Left cardiac atrium (tissue), 4 donors: ENCODE measurements at regions of chrX and their contacts with region 1.

Region 1: DNA sequence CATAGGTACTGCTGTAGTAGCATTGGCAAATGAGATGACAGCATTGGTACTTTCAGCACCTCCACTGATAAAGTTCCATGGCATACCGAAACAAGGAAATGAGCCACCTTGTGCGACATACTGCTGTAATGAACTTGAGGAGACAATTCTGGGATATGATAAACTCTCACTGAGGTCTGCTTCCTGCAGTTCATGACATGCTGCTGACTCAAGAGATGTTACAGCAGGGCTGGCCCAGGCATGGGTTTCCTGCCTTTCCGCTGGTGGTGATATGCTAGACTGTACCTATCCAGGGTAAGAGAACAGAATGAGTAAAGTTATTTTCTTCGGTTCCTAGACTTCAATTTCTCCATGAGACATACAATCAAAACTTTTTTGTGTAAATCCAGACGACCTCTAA is 17.1 kb downstream of the BEND2 start:
- DNase-seq: no peak
- ATAC-seq: no peak

Region 2: DNA sequence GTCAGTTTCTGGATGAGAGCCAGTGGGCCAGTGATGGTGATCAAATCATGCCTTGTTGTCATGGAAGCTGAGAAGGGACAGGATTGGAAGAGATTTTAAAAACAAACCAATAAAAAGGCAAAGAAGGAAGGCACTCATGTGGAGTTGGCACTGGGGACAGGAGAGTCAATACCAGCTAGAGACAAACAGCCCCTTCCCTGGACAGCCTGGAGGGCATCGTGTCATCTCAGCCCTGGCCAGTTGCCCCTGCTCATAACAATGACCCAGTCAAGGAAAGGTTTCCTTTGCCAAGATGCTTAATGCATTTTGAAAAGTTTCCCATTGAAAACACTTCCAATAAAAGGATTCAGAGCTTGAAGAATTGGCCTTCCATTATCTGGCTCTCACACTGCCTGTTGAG is 410.8 kb before region 1 on chrX:
- intact Hi-C with region 1: loop called in 1 of 2 experiments (anchors 10 kb)
- DNase-seq: no peak
- ATAC-seq: no peak

Region 3: GRCh38 chrX:17967888-17968287 is 235.7 kb before region 1 on chrX:
- intact Hi-C with region 1: no loop called
- DNase-seq: no peak
- ATAC-seq: peak in 1 of 2 donors; percentile 38

Region 4: GRCh38 chrX:18354369-18355223 is 151.0 kb after region 1 on chrX and contains the start of gene SCML2:
- intact Hi-C with region 1: no loop called
- DNase-seq: peak; percentile 36
- ATAC-seq: peak; percentile 88 to 92
- total RNA-seq, gene SCML2: 1.5 to 1.8 TPM